ENCODE measurements at regions of chr1 and their contacts with region 1.

Region 1: GRCh38 chr1:94805912-94806311 is 14.2 kb upstream of the SLC44A3 start:
- DNase-seq: peak; percentile 49
- ATAC-seq: peak; percentile 31 to 42

Region 2: GRCh38 chr1:94481473-94481933 is 324.4 kb before region 1 on chr1:
- intact Hi-C with region 1: loop called in 1 of 2 experiments (anchors 2 kb)
- DNase-seq: no peak
- ATAC-seq: peak; percentile 90 to 94

Region 3: GRCh38 chr1:94514095-94514727 is 291.7 kb before region 1 on chr1:
- intact Hi-C with region 1: loop called in 1 of 2 experiments (anchors 2 kb)
- DNase-seq: no peak
- ATAC-seq: peak; percentile 35 to 53

Region 4: DNA sequence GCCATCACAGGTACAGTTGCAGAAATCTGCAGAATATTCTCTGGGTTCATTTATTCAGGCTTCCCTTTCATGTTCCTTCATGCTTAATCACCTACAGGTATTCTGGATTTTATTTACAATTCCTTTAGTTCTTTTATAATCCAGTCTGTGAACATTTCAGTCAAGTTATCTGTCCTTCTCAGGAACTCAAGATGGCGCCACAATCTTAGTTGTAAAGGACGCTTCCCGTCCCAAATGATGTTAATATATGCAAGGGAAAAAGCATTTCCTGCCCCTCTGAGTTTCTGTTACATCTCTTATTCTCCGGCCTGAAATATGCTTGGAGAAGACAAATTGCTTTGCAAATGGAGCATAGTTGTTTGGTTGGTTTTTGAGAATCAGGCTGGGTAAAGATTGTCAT is 283.6 kb before region 1 on chr1:
- intact Hi-C with region 1: loop called in 1 of 2 experiments (anchors 10 kb)
- DNase-seq: no peak
- ATAC-seq: peak; percentile 44 to 65

Region 5: DNA sequence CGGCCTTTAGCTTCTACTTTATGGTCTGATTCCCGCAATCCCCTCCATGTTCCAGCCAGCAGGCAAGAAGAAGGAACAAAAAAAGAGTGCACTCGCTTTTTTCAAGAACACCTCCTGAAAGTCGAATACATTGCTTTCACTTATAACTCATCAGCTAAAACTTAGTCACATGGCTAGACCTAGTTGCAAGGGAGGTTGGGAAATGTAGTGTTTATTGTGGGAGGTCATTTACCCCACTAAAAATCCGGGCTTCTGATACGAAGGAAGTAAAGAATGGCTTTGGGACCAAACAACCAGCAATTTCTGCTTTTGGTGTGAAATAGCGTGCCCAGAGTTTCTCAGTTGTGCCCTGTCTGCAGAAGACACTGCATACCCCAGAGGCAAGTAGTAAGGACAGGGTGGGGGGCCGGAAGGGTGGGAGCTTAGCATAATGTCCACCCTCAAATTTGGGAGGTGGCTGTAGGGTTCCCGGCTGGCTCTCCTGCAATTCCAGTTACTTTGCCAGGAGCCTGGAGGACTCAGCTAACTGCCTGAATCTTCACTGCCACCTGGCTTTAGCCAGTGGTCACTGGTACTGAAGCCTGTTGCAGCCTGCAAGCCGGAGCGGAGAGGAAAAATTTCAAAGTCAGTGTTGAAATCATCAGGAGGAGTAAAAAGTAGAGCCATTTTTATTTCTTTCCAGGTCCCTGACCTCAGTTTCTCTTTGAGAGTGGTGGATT is 206.7 kb before region 1 on chr1:
- intact Hi-C with region 1: loop called in 1 of 2 experiments (anchors 5 kb)
- DNase-seq: no peak
- ATAC-seq: peak; percentile 70 to 86